Cardiac septum (tissue), 1 donor: ENCODE measurements at regions of chr3 and their contacts with region 1.

Region 1: GRCh38 chr3:157201648-157202278 is 41.8 kb upstream of the CCNL1 start:
- DNase-seq: no peak

Region 2: GRCh38 chr3:157354722-157355121 is 153.0 kb after region 1 on chr3:
- intact Hi-C with region 1: loop called (anchors 10 kb)
- DNase-seq: no peak

Region 3: GRCh38 chr3:157429708-157430107 is 227.9 kb after region 1 on chr3:
- intact Hi-C with region 1: no loop called
- DNase-seq: no peak

Region 4: GRCh38 chr3:157493627-157494550 is 292.1 kb after region 1 on chr3:
- intact Hi-C with region 1: loop called (anchors 2 kb)
- DNase-seq: no peak